ENCODE measurements at regions of chr19 and their contacts with region 1.

Region 1: GRCh38 chr19:45862564-45863334 is at the start of gene SYMPK:
- DNase-seq: peak; percentile 96 to 99 (median 98)
- ATAC-seq: peak; percentile 95
- H3K4me3 ChIP-seq: peak within 1 kb of the TSS; percentile 95
- H3K27ac ChIP-seq: peak within 1 kb of the TSS; percentile 86
- H3K4me1 ChIP-seq: peaks cover 23 to 45% of the 10 kb centered on the region in 2 experiments
- H3K27me3 ChIP-seq: no peaks in the 10 kb centered on the region
- CTCF ChIP-seq: no peak
- EP300 ChIP-seq: no peak
- POLR2A ChIP-seq: peak; percentile 90
- RAD21 ChIP-seq: no peak
- polyA plus RNA-seq, gene SYMPK: 0.73 to 0.85 TPM

Region 2: DNA sequence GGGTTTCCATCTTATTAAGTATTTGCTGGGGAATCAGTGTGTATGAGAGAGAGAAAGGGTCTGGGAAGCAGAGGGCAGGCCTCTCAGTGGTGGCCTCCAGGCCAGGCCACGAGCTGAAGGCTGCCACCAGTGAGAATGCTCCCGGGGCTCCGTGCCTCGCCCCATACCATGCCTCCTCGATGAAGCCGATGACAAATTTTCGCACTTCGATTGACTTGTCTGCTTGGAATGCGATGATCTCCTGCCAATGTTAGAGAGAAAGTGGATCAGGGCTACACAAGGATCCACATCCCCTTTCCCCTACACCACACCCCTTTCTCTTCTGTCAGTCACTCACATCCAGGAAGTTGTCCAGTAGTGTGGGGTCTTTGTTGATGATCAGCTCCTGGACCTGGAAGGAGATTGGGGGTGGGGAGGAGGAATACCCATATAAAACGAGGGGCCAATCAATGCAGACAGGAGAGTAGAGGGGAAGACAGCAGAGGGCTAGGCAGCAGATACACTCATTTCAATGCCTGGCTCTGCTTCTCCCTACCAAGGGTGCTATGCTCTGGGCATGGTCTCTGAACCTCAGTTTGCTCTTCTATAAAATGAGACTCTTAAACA is 10.5 kb before region 1 on chr19:
- CTCF ChIA-PET with region 1: no interaction called
- POLR2A ChIA-PET with region 1: interaction called, 11 read pairs
- in situ Hi-C with region 1: no loop called
- intact Hi-C with region 1: no loop called
- DNase-seq: no peak
- ATAC-seq: no peak
- H3K4me3 ChIP-seq: no peak overlapping the region
- H3K27ac ChIP-seq: no peak overlapping the region
- H3K4me1 ChIP-seq: peaks cover 0 to 3% of the 10 kb centered on the region in 2 experiments; a peak in 1 of 5 replicates
- H3K27me3 ChIP-seq: no peaks in the 10 kb centered on the region
- CTCF ChIP-seq: no peak
- EP300 ChIP-seq: no peak
- POLR2A ChIP-seq: no peak
- RAD21 ChIP-seq: no peak

Region 3: DNA sequence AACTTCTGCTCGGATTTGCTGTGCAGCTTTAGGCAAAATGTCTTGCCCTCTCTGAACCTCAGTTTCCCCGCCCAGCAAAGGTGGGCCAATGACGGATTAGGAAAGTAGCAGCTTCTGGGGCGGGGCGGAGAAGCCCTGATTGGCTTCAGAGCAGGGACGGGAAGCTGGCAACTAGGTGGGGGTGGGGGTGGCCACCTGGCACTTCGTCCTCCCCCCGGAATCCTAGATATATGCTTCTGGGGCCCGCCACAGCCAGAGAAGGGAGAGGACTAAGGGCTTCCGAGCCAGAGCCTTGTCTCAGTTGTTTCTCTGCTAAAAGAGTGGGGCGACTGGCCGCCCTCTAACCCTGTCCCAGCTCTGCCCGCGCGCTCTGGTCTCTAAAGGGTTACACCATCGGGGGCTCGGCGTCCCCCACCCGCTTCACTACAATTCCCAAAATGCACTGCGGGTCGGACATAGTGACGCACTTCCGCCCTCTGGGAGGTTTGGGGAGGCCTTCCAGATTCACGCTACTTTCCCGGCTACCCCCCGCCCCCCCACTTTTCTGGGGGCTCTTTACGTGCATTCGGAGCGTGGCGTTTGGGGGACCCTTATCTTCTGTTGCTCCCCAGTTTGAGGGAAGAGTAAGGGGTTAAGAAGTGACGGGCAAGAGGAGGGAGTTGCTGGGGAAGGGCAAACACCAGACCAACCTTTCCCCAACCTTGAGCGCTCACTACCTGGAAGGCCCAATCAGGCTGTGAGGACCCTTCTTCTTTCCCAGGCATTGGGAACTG is 23.9 kb after region 1 on chr19:
- CTCF ChIA-PET with region 1: interaction called, 102 read pairs
- POLR2A ChIA-PET with region 1: interaction called, 9 read pairs
- in situ Hi-C with region 1: no loop called
- intact Hi-C with region 1: loop called (anchors 1 kb)
- DNase-seq: peak; percentile 85 to 96 (median 90)
- ATAC-seq: peak; percentile 74
- H3K4me3 ChIP-seq: peak overlapping the region; percentile 58
- H3K27ac ChIP-seq: peak overlapping the region; percentile 94
- H3K4me1 ChIP-seq: peaks cover 37 to 63% of the 10 kb centered on the region in 2 experiments; a peak in 4 of 5 replicates
- H3K27me3 ChIP-seq: no peaks in the 10 kb centered on the region
- CTCF ChIP-seq: no peak
- EP300 ChIP-seq: no peak
- POLR2A ChIP-seq: peak; percentile 72
- RAD21 ChIP-seq: no peak

Region 4: GRCh38 chr19:45902651-45903625 is 40.2 kb after region 1 on chr19:
- CTCF ChIA-PET with region 1: no interaction called
- POLR2A ChIA-PET with region 1: interaction called, 6 read pairs
- in situ Hi-C with region 1: no loop called
- intact Hi-C with region 1: loop called (anchors 1 kb)
- DNase-seq: peak; percentile 99 to 100 (median 100)
- ATAC-seq: peak; percentile 92
- H3K4me3 ChIP-seq: peak overlapping the region; percentile 52
- H3K27ac ChIP-seq: no peak overlapping the region; the same call in 2 of the 3 replicates
- H3K4me1 ChIP-seq: peaks cover 6 to 25% of the 10 kb centered on the region in 2 experiments; a peak in 4 of 5 replicates
- H3K27me3 ChIP-seq: no peaks in the 10 kb centered on the region
- CTCF ChIP-seq: no peak
- EP300 ChIP-seq: no peak
- POLR2A ChIP-seq: peak; percentile 73
- RAD21 ChIP-seq: no peak

Region 5: GRCh38 chr19:45913874-45914830 is 51.4 kb after region 1 on chr19 and contains the start of gene NANOS2:
- CTCF ChIA-PET with region 1: no interaction called
- POLR2A ChIA-PET with region 1: no interaction called
- in situ Hi-C with region 1: no loop called
- intact Hi-C with region 1: no loop called
- DNase-seq: peak; percentile 72 to 82 (median 78)
- ATAC-seq: peak; percentile 96
- H3K4me3 ChIP-seq: no peak within 1 kb of the TSS
- H3K27ac ChIP-seq: no peak within 1 kb of the TSS
- H3K4me1 ChIP-seq: peaks cover 0 to 9% of the 10 kb centered on the region in 2 experiments; a peak in 2 of 5 replicates
- H3K27me3 ChIP-seq: peaks cover 11 to 20% of the 10 kb centered on the region in 2 experiments; a peak in 3 of 5 replicates
- CTCF ChIP-seq: peak; percentile 61 to 85 (median 64)
- EP300 ChIP-seq: no peak
- POLR2A ChIP-seq: no peak
- RAD21 ChIP-seq: peak in 1 of 2 experiments; percentile 62; a peak in 2 of 4 replicates
- polyA plus RNA-seq, gene NANOS2: not detected